ENCODE measurements at regions of chr16 and their contacts with region 1.

Region 1: DNA sequence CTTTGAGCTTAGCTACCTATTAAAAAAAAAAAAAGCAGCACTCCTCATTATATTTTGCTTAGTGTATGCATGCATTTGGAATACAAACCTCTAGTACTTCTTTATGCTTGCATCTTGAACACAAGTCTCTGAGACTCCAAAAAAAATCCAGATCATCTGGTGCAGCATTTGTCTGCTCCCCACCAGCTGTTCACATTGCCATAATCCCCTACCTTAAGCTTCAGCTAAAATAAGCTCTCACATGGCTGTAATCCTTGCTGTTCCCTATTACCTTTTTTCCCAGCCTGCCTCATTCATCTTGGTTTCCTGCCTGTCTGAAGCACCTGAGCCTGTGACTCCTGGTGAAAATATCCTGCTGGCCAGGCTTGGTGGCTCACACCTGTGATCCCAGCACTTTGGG is 7.5 kb upstream of the NFATC2IP start:
- DNase-seq: no peak
- H3K4me3 Mint-ChIP-seq: no peak overlapping the region
- H3K27ac Mint-ChIP-seq: no peak overlapping the region
- H3K4me1 Mint-ChIP-seq: peaks cover 17% of the 10 kb centered on the region
- H3K27me3 Mint-ChIP-seq: no peaks in the 10 kb centered on the region
- CTCF ChIP-seq: no peak

Region 2: DNA sequence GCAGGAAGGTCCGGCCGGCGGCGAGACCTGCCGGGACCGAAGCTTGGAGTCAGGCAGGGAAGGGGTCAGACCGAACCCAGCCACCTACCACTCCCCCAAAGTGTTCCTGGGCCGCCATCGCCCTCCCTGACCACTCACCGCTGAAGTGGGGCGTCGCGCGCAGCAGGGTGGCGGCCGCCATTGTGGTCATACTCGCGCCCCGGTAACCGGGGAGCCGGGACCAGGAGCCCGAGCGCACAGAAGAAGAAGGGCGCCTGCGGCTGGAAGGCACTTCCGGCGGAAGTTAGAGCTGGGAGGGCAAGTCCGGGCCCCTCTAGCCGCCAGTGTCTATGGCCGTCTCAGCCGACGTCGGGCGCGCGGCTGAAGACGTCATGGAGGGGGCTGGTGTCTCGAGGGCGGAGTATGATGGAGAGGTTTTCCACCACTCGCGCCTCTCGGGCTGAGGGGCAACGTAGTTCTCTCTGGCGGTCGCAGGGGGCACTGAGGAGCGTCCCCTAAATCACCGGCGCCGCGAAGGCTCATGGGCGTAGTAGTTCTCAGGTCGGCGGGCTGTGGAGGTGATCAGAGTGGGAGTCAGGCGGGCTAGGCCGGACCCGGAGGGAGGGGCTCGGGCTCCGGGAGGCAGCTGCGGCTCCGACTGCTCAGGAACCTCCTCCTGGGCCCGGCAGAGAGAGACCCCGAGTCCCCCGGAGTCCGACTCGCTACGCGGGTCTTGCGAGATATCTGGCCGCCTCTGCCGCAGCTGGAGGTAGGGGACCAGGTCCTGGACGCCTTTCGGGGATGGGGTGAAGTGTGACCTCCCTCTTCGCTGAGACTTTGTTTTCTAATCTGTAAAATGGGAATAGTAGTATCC is 97.0 kb before region 1 on chr16 and contains the start of gene TUFM:
- CTCF ChIA-PET with region 1: interaction called, 28 read pairs
- POLR2A ChIA-PET with region 1: interaction called, 14 read pairs
- intact Hi-C with region 1: no loop called
- DNase-seq: peak; percentile 97
- H3K4me3 Mint-ChIP-seq: peak within 1 kb of the TSS; percentile 99
- H3K27ac Mint-ChIP-seq: peak within 1 kb of the TSS; percentile 99
- H3K4me1 Mint-ChIP-seq: peaks cover 7% of the 10 kb centered on the region
- H3K27me3 Mint-ChIP-seq: no peaks in the 10 kb centered on the region
- CTCF ChIP-seq: peak; percentile 39
- total RNA-seq, gene TUFM: 184 and 198 TPM in 2 replicates

Region 3: DNA sequence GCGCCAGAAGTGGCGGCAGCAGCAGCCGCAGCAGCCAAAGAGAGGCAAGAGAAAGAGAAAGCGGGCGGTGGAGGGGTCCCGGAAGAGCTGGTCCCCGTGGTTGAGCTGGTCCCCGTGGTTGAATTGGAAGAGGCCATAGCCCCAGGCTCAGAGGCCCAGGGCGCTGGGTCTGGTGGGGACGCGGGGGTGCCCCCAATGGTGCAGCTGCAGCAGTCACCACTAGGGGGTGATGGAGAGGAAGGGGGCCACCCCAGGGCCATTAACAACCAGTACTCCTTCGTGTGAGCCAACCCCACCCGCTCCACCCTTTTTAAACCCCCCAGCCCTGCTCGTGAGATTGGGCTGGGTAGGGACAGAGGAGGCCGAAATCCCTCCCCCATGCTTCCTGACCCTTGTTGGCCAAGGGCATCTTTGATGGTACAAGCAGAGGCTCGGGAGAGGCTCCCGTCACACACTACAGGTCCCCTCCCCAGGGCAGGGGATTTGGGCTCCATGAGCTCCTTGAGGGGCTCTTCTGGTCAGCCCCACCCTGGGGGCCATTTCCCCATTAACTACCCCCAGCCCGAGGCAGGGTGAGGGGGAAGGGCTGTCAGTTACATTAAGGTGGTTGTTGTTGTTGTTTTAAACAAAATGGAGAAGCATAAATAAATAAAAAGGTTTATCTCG is 69.6 kb before region 1 on chr16:
- CTCF ChIA-PET with region 1: interaction called, 23 read pairs
- POLR2A ChIA-PET with region 1: no interaction called
- intact Hi-C with region 1: loop called (anchors 2 kb)
- DNase-seq: peak; percentile 30
- H3K4me3 Mint-ChIP-seq: no peak overlapping the region
- H3K27ac Mint-ChIP-seq: no peak overlapping the region
- H3K4me1 Mint-ChIP-seq: no peaks in the 10 kb centered on the region
- H3K27me3 Mint-ChIP-seq: no peaks in the 10 kb centered on the region
- CTCF ChIP-seq: peak; percentile 77

Region 4: DNA sequence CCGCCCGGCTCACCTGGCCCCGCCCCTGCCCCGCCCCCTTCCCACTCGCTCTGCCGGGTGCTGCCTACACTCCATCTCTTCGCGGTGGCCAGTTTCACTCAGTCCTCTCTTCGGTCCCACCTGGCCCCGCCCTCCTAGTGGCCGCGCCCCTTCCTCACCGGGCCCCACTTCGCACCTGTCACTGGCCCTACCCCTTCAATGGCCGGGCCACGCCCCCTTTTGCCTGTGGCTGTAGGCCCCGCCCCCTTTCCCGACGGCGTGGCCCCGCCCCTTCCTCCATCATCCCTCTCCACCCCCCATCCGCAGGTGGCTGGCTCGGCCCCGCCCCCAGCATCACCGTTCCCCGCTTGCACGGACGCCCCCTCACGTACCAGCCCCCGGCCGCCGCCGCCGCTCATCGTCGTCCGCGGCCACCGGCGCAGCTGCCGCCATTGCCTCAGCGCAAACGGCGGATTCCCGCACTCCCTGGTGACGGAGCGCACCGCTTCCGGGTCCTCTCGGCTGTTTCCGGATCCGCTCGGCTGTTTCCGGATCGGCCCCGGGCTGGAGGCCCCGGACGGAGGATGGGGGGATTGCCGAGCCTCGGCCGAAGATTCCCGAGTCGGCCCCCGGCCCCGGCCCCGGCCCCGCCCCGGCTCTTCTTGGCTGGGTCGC is 18.4 kb before region 1 on chr16 and contains the start of gene RABEP2:
- CTCF ChIA-PET with region 1: interaction called, 22 read pairs
- POLR2A ChIA-PET with region 1: interaction called, 19 read pairs
- intact Hi-C with region 1: loop called (anchors 1 kb)
- DNase-seq: peak; percentile 95
- H3K4me3 Mint-ChIP-seq: peak within 1 kb of the TSS; percentile 85
- H3K27ac Mint-ChIP-seq: peak within 1 kb of the TSS; percentile 76
- H3K4me1 Mint-ChIP-seq: peaks cover 15% of the 10 kb centered on the region
- H3K27me3 Mint-ChIP-seq: no peaks in the 10 kb centered on the region
- CTCF ChIP-seq: no peak
- total RNA-seq, gene RABEP2: 10.7 and 17.8 TPM in 2 replicates